K562 (cell line): ENCODE measurements at regions of chr1 and their contacts with region 1.

Region 1: GRCh38 chr1:22416555-22417454 is 34.8 kb upstream of the ZBTB40 start:
- DNase-seq: peak; percentile 87 to 92 (median 90)
- ATAC-seq: peak; percentile 93
- H3K4me3 ChIP-seq: no peak overlapping the region
- H3K27ac ChIP-seq: no peak overlapping the region
- H3K4me1 ChIP-seq: peaks cover 3 to 4% of the 10 kb centered on the region in 2 experiments; a peak in 2 of 5 replicates
- H3K27me3 ChIP-seq: peaks cover 23 to 32% of the 10 kb centered on the region in 2 experiments
- CTCF ChIP-seq: peak; percentile 95 to 99 (median 96)
- EP300 ChIP-seq: no peak
- POLR2A ChIP-seq: no peak
- RAD21 ChIP-seq: peak; percentile 97 to 99

Region 2: DNA sequence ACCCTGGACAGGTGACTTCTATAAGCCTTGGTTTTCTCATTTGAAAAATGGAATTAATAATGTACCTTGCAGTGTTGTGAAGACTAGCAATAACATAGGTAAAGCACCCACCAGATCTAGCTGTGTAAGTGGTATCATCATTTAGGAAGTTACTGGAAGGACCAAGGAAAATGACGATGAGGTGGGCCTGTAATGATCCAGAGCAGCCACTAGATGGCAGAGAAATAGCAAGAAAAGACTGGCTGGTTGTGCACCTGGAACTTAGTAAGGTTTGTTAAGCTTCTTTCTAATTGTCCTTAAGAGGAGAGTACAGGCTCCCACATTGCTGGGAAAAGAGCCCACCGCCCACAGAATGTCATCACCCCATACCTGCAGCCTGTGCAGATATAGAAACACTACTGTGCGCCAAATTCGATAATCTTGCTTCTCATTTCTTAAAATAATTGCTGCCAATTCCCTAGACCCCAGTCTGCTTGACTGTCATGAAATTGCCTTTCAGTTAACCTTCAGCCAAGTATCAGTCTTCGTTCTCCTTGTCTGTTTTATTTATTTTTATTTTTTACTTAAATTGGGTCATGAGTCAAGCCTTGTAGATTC is 311.1 kb before region 1 on chr1:
- CTCF ChIA-PET with region 1: interaction called, 24 read pairs
- POLR2A ChIA-PET with region 1: no interaction called
- in situ Hi-C with region 1: no loop called
- intact Hi-C with region 1: loop called (anchors 1 kb)
- DNase-seq: peak; percentile 67 to 76 (median 74)
- ATAC-seq: peak; percentile 79
- H3K4me3 ChIP-seq: no peak overlapping the region
- H3K27ac ChIP-seq: no peak overlapping the region
- H3K4me1 ChIP-seq: no peaks in the 10 kb centered on the region; a peak in 2 of 5 replicates
- H3K27me3 ChIP-seq: no peaks in the 10 kb centered on the region
- CTCF ChIP-seq: peak; percentile 74 to 89 (median 88)
- EP300 ChIP-seq: no peak
- POLR2A ChIP-seq: no peak
- RAD21 ChIP-seq: peak; percentile 60 to 82

Region 3: DNA sequence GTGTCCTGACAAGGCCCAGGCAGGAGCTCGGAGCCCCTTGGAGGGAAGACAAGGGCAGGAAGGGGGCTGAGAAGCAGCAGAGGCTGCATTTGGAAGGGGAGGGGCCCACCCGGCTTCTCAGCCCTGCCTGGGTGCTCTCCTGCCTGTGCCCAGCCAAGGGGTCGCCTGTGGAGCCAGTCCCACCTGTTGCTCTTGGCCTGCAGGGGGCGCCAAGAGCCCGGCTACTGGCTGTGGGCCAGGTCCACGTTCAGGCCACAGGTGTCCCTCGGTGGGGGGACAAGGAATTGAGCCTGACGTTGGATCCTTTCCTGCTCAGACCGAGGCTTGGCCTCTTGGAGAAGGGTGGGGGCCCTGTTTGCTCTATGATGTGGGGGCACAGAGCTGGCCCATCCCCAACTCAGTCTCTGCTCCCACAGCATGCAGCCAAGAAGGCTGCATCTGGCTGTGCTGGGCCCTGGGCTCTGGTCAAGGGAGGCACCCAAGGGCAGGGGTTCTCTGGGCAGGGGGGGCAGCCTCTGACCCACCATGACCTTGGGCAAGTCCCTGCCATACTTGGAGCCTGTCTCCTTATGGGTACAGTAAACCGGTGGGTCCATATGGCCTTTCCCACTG is 284.8 kb before region 1 on chr1:
- CTCF ChIA-PET with region 1: interaction called, 30 read pairs
- POLR2A ChIA-PET with region 1: interaction called, 3 read pairs
- in situ Hi-C with region 1: loop called (anchors 5 kb)
- intact Hi-C with region 1: loop called (anchors 2 kb)
- DNase-seq: peak; percentile 83 to 92 (median 88)
- ATAC-seq: peak; percentile 95
- H3K4me3 ChIP-seq: no peak overlapping the region
- H3K27ac ChIP-seq: no peak overlapping the region
- H3K4me1 ChIP-seq: peaks cover 0 to 27% of the 10 kb centered on the region in 2 experiments; a peak in 2 of 5 replicates
- H3K27me3 ChIP-seq: peaks cover 12 to 64% of the 10 kb centered on the region in 2 experiments; a peak in 3 of 5 replicates
- CTCF ChIP-seq: peak; percentile 95 to 98 (median 97)
- EP300 ChIP-seq: no peak
- POLR2A ChIP-seq: no peak
- RAD21 ChIP-seq: peak; percentile 90 to 98

Region 4: GRCh38 chr1:22216210-22216883 is 200.5 kb before region 1 on chr1:
- CTCF ChIA-PET with region 1: interaction called, 3 read pairs
- POLR2A ChIA-PET with region 1: no interaction called
- in situ Hi-C with region 1: no loop called
- intact Hi-C with region 1: loop called (anchors 10 kb)
- DNase-seq: no peak
- ATAC-seq: peak; percentile 54
- H3K4me3 ChIP-seq: no peak overlapping the region
- H3K27ac ChIP-seq: no peak overlapping the region
- H3K4me1 ChIP-seq: no peaks in the 10 kb centered on the region
- H3K27me3 ChIP-seq: peaks cover 44 to 69% of the 10 kb centered on the region in 2 experiments
- CTCF ChIP-seq: no peak
- EP300 ChIP-seq: no peak
- POLR2A ChIP-seq: no peak
- RAD21 ChIP-seq: no peak

Region 5: GRCh38 chr1:22527555-22528296 is 110.9 kb after region 1 on chr1:
- CTCF ChIA-PET with region 1: interaction called, 6 read pairs
- POLR2A ChIA-PET with region 1: no interaction called
- in situ Hi-C with region 1: no loop called
- intact Hi-C with region 1: loop called (anchors 10 kb)
- DNase-seq: no peak
- ATAC-seq: no peak
- H3K4me3 ChIP-seq: no peak overlapping the region
- H3K27ac ChIP-seq: no peak overlapping the region
- H3K4me1 ChIP-seq: peaks cover 0 to 2% of the 10 kb centered on the region in 2 experiments; a peak in 1 of 5 replicates
- H3K27me3 ChIP-seq: no peaks in the 10 kb centered on the region
- CTCF ChIP-seq: peak in 1 of 3 experiments; percentile 19; a peak in 1 of 6 replicates
- EP300 ChIP-seq: no peak
- POLR2A ChIP-seq: no peak
- RAD21 ChIP-seq: peak in 1 of 2 experiments; percentile 32; a peak in 1 of 4 replicates

Region 6: GRCh38 chr1:22641906-22642636 is 225.3 kb after region 1 on chr1:
- CTCF ChIA-PET with region 1: interaction called, 96 read pairs
- POLR2A ChIA-PET with region 1: interaction called, 3 read pairs
- in situ Hi-C with region 1: loop called (anchors 5 kb)
- intact Hi-C with region 1: loop called (anchors 1 kb)
- DNase-seq: peak; percentile 83 to 94 (median 92)
- ATAC-seq: peak; percentile 95
- H3K4me3 ChIP-seq: no peak overlapping the region
- H3K27ac ChIP-seq: no peak overlapping the region
- H3K4me1 ChIP-seq: peaks cover 0 to 13% of the 10 kb centered on the region in 2 experiments; a peak in 3 of 5 replicates
- H3K27me3 ChIP-seq: peaks cover 1 to 42% of the 10 kb centered on the region in 2 experiments; a peak in 3 of 5 replicates
- CTCF ChIP-seq: peak; percentile 89 to 94 (median 94)
- EP300 ChIP-seq: no peak
- POLR2A ChIP-seq: no peak
- RAD21 ChIP-seq: peak; percentile 94 to 98

Region 7: DNA sequence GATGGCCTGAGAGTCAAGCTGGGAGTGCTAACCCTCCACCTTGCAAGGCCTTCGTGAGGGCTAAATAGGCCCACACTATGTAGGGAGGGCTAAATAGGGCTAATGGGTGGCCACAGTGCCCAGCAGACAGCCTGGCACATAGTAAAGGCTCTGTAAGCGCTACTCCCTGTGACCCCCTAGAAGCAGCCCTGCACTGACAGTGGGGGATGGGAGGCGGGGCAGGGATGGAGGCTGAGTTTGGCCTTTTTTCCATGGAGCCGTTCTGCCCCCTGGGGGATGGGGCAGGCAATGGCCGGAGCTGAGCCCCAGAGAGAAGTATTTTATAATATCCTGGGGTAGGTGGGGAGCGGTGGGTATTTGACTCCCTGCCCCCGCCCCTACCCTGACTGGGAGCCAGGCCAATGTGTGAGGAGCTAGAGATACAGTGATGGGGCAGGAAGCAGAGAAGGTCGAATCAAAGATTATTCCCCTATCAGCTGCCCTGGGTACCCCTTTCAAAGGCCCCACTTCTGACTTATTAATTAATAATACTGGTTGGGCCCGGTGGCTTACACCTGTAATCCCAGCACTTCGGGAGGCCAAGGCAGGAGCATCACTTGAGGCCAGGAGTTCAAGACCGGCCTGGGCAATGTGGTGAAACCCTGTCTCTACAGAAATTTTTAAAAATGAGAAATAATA is 513.6 kb after region 1 on chr1:
- CTCF ChIA-PET with region 1: interaction called, 3 read pairs
- POLR2A ChIA-PET with region 1: no interaction called
- in situ Hi-C with region 1: no loop called
- intact Hi-C with region 1: loop called (anchors 10 kb)
- DNase-seq: peak; percentile 75 to 91 (median 90)
- ATAC-seq: peak; percentile 98
- H3K4me3 ChIP-seq: no peak overlapping the region
- H3K27ac ChIP-seq: no peak overlapping the region
- H3K4me1 ChIP-seq: no peaks in the 10 kb centered on the region; a peak in 1 of 5 replicates
- H3K27me3 ChIP-seq: peaks cover 23 to 55% of the 10 kb centered on the region in 2 experiments
- CTCF ChIP-seq: peak; percentile 89 to 93 (median 91)
- EP300 ChIP-seq: no peak
- POLR2A ChIP-seq: no peak
- RAD21 ChIP-seq: peak; percentile 71 to 91